ENCODE measurements at regions of chr14 and their contacts with region 1.

Region 1: DNA sequence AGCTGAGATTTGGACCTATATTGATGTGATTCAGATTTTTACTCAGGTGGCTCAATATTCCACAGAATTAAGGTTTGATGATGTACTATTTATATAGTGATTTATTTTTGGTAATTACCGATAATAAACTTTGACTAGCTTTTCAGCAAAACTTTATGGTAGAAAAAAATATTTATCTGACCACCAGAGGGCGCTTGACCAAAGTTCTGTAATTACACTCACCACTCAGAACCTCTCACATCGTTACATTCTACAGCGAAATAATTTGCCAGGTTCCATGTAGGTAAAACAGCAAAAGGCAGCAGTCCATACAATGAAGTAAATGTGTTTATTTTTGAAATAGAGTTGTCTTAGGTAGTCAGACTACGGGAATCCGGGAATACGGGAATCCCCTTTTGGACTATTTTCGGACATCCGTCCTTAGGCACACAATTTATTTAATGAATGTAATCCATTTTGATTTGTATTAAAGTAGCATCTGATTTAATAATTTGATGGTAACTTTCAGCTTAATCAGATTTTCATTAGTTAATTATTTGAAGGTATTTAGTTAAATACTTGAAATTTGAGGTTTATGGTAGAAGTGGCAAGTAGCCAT is 143.0 kb upstream of the DDHD1 start:
- DNase-seq: no peak
- H3K4me3 ChIP-seq: no peak overlapping the region
- CTCF ChIP-seq: peak in 1 of 3 donors; percentile 57
- POLR2A ChIP-seq: no peak

Region 2: GRCh38 chr14:53412803-53413675 is 117.0 kb after region 1 on chr14:
- intact Hi-C with region 1: no loop called
- DNase-seq: no peak
- H3K4me3 ChIP-seq: no peak overlapping the region
- CTCF ChIP-seq: no peak
- POLR2A ChIP-seq: no peak

Region 3: GRCh38 chr14:54347997-54348611 is 1052.0 kb after region 1 on chr14:
- intact Hi-C with region 1: loop called (anchors 5 kb)
- DNase-seq: no peak
- H3K4me3 ChIP-seq: no peak overlapping the region
- CTCF ChIP-seq: peak in 1 of 3 donors; percentile 31
- POLR2A ChIP-seq: no peak

Measured in lower leg skin (tissue), 4 donors.